K562 (cell line): ENCODE measurements at regions of chr6 and their contacts with region 1.

Region 1: DNA sequence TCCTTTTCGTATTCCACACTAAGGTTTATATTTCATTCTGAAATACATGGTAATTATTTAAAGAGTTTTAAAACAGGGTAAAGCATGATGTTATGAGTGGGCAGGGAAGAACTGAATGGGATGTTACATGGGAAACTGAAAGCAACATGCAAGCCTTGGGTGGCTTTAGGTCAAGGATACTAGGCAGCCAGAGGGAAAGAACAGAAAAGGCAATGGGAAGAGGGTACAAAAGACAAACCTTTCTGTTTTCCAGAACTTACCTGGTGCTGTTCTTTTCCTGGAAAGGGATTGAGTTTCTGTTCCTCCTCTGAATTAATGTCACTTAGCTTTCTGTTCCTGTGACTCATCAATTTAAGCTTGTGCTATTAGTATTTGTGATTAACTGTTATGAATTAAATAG is 71.2 kb upstream of the SMIM8 start:
- DNase-seq: no peak
- ATAC-seq: no peak
- H3K4me3 ChIP-seq: no peak overlapping the region
- H3K27ac ChIP-seq: no peak overlapping the region
- H3K4me1 ChIP-seq: no peaks in the 10 kb centered on the region
- H3K27me3 ChIP-seq: no peaks in the 10 kb centered on the region
- CTCF ChIP-seq: no peak
- EP300 ChIP-seq: no peak
- POLR2A ChIP-seq: no peak
- RAD21 ChIP-seq: no peak

Region 2: GRCh38 chr6:87078983-87079616 is 172.1 kb before region 1 on chr6:
- CTCF ChIA-PET with region 1: no interaction called
- POLR2A ChIA-PET with region 1: no interaction called
- in situ Hi-C with region 1: loop called (anchors 10 kb)
- intact Hi-C with region 1: no loop called
- DNase-seq: peak; percentile 75 to 83 (median 78)
- ATAC-seq: peak; percentile 99
- H3K4me3 ChIP-seq: no peak overlapping the region
- H3K27ac ChIP-seq: no peak overlapping the region
- H3K4me1 ChIP-seq: no peaks in the 10 kb centered on the region
- H3K27me3 ChIP-seq: peaks cover 2 to 4% of the 10 kb centered on the region in 2 experiments; a peak in 2 of 5 replicates
- CTCF ChIP-seq: peak; percentile 78 to 91 (median 84)
- EP300 ChIP-seq: no peak
- POLR2A ChIP-seq: no peak
- RAD21 ChIP-seq: peak in 1 of 2 experiments; percentile 29; a peak in 1 of 4 replicates

Region 3: DNA sequence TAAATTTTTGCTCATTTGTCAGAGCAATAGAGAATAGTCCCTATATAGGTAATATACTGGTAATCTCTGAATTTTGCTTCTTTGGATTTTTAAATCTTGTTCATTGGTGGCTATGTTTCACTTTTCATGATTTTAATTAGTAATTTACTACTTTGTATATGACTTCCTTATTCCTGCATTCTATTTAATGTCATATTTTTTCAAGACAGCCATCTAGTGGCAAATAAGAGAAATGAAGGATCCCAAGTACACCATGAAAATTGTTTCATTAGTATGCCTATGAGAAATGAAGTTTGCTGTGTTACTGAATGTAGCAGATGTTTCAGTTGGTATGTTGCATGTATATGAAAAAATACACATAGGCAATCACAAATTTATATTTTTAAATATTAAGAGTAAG is 13.4 kb before region 1 on chr6:
- CTCF ChIA-PET with region 1: no interaction called
- POLR2A ChIA-PET with region 1: no interaction called
- in situ Hi-C with region 1: no loop called
- intact Hi-C with region 1: no loop called
- DNase-seq: peak in 3 of 4 experiments; percentile 11 to 17 (median 14)
- ATAC-seq: peak; percentile 70; the same call in 2 of the 3 replicates
- H3K4me3 ChIP-seq: no peak overlapping the region
- H3K27ac ChIP-seq: no peak overlapping the region
- H3K4me1 ChIP-seq: no peaks in the 10 kb centered on the region
- H3K27me3 ChIP-seq: no peaks in the 10 kb centered on the region
- CTCF ChIP-seq: peak; percentile 15 to 51 (median 24); a peak in 3 of 6 replicates
- EP300 ChIP-seq: no peak
- POLR2A ChIP-seq: no peak
- RAD21 ChIP-seq: peak in 1 of 2 experiments; percentile 50; a peak in 2 of 4 replicates